GM13976 (cell line): ENCODE measurements at regions of chr22 and their contacts with region 1.

Region 1: GRCh38 chr22:36781656-36782627 is 6.0 kb upstream of the IFT27 start:
- DNase-seq: peak; percentile 91
- CTCF ChIP-seq: peak; percentile 97

Region 2: DNA sequence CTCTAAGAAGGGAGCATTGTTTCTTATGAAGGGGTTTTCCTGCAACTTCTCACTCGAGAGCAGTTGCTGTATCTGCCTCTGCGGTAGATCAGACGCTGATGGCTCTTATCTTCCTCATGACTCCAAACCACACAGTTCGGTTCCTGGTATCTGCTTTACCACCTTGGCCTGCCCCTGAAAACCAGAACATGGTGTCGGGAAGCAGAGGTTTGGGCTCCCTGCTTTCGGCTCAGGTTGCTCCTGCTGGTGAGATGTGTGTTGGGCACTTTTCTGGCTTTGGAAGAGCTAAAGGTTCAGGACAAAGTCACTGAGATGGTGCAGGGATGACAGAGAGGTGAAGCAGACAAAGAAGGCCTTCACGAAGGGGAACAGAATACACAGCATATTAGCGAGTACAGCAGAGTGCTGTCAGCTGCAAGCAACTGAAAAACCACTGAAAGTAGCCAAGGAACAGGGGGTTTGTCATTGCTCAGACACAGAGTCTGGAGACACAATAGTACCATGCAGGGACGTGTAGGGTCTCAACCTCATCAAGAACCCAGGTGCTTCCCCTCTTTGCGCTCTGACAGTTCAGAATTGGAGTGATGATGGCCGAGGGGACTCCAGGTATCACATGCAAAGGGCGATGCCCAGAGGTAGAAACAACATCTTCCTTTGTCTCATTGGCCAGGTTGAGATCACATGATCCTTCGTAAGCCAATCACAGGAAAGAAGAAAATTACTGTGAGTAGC is 119.6 kb after region 1 on chr22:
- in situ Hi-C with region 1: no loop called
- DNase-seq: peak; percentile 76
- CTCF ChIP-seq: no peak

Region 3: GRCh38 chr22:36977947-36978660 is 196.2 kb after region 1 on chr22:
- in situ Hi-C with region 1: loop called (anchors 10 kb)
- DNase-seq: peak; percentile 95
- CTCF ChIP-seq: peak; percentile 92